Caco-2 (cell line): ENCODE measurements at regions of chr6 and their contacts with region 1.

Region 1: DNA sequence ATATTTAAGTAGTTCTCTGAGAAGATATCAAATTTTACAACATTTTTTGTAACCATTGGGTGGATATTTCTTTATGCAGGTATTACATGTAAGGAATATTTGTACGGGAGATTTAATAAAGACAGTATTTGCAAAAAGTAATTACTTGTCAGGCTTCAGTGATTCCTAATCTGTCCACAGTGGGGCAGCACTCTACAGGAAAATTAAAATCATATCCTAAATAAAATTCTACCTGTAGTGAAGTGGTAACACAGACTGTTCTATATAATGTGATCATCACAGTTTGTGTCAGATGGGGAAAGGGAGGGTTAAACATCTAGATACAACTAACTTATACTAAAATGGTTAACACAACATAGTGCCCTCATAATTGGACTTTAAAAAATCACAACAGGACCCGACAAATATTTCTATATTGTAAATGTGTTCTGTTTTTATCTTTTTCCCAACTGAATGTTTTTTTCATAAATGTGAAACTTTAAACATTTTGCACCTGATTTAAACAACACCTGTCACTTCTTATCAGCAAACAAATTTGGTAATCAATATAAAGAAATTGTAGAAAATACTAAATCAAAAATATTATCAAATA is 145.6 kb upstream of the MANEA start:
- DNase-seq: peak in 1 of 2 experiments; percentile 55
- H3K4me3 ChIP-seq: no peak overlapping the region
- H3K4me3 Mint-ChIP-seq: no peak overlapping the region
- H3K27ac Mint-ChIP-seq: no peak overlapping the region
- H3K4me1 ChIP-seq: no peaks in the 10 kb centered on the region
- H3K4me1 Mint-ChIP-seq: no peaks in the 10 kb centered on the region
- H3K27me3 ChIP-seq: no peaks in the 10 kb centered on the region
- H3K27me3 Mint-ChIP-seq: no peaks in the 10 kb centered on the region
- CTCF ChIP-seq: peak; percentile 57 to 71

Region 2: DNA sequence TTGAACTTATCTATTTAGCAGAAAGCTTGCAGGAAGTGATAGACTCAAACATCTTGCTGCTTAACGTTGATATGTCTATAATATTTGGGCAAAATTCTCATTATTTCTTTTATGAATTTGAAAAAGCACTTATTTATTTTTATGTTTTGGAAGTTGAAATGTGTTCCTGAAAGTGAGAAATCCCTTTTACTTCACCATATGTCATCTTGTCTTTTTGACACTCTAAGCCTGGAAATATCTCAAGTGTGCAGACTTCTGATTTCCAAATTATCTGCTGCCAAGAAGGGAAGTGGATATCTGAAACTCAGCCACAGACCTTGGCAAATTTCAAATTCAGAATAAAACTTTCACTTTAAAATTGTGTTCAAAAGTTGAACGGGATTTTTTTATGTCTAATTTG is 223.1 kb before region 1 on chr6:
- CTCF ChIA-PET with region 1: no interaction called
- POLR2A ChIA-PET with region 1: no interaction called
- intact Hi-C with region 1: no loop called
- DNase-seq: no peak
- H3K4me3 ChIP-seq: no peak overlapping the region
- H3K4me3 Mint-ChIP-seq: no peak overlapping the region
- H3K27ac Mint-ChIP-seq: no peak overlapping the region
- H3K4me1 ChIP-seq: no peaks in the 10 kb centered on the region
- H3K4me1 Mint-ChIP-seq: no peaks in the 10 kb centered on the region
- H3K27me3 ChIP-seq: no peaks in the 10 kb centered on the region
- H3K27me3 Mint-ChIP-seq: no peaks in the 10 kb centered on the region
- CTCF ChIP-seq: no peak

Region 3: DNA sequence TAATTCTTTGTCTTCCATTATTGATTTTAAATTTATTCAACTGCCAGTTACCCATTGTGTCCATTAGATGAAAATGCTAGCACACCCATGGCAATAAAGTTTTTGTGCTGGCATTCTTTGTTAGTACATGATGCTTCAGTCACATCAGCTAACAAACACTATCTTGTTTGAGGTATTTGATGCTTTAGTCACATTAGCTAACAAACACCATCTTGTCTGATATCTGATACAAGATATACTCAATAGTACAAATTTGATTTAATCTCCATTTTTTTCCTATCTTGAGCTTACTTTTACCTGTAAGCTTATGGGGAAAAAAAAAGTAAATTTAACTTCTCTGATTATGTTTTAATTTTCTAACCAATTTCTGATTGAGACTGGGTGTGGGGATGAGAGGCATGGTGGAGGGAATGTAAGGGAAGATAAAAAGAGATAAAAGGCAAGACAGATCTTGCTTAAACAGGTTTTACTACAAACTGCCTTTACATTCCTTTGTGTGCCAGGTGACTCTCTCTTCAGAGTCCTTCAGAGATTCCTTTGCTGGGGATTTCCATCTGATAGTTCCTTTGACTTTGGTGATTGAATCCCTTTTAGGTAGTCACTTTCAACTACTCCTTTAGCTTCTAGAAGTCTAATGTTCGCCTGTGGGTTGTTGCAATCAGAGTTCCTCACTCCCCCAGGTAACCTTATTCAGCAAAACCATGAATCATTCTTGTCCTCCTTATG is 137.9 kb before region 1 on chr6:
- CTCF ChIA-PET with region 1: no interaction called
- POLR2A ChIA-PET with region 1: no interaction called
- intact Hi-C with region 1: no loop called
- DNase-seq: peak; percentile 39 to 53
- H3K4me3 ChIP-seq: no peak overlapping the region
- H3K4me3 Mint-ChIP-seq: peak overlapping the region; percentile 49
- H3K27ac Mint-ChIP-seq: peak overlapping the region; percentile 92
- H3K4me1 ChIP-seq: peaks cover 24% of the 10 kb centered on the region
- H3K4me1 Mint-ChIP-seq: peaks cover 15% of the 10 kb centered on the region
- H3K27me3 ChIP-seq: no peaks in the 10 kb centered on the region
- H3K27me3 Mint-ChIP-seq: no peaks in the 10 kb centered on the region
- CTCF ChIP-seq: no peak

Region 4: GRCh38 chr6:95364016-95364604 is 67.6 kb before region 1 on chr6:
- CTCF ChIA-PET with region 1: no interaction called
- POLR2A ChIA-PET with region 1: no interaction called
- intact Hi-C with region 1: loop called (anchors 1 kb)
- DNase-seq: no peak
- H3K4me3 ChIP-seq: no peak overlapping the region
- H3K4me3 Mint-ChIP-seq: no peak overlapping the region
- H3K27ac Mint-ChIP-seq: no peak overlapping the region
- H3K4me1 ChIP-seq: peaks cover 9% of the 10 kb centered on the region
- H3K4me1 Mint-ChIP-seq: peaks cover 12% of the 10 kb centered on the region
- H3K27me3 ChIP-seq: no peaks in the 10 kb centered on the region
- H3K27me3 Mint-ChIP-seq: no peaks in the 10 kb centered on the region
- CTCF ChIP-seq: peak; percentile 26 to 38

Region 5: GRCh38 chr6:95685822-95686221 is 254.1 kb after region 1 on chr6:
- CTCF ChIA-PET with region 1: no interaction called
- POLR2A ChIA-PET with region 1: no interaction called
- intact Hi-C with region 1: loop called (anchors 1 kb)
- DNase-seq: no peak
- H3K4me3 ChIP-seq: no peak overlapping the region
- H3K4me3 Mint-ChIP-seq: no peak overlapping the region
- H3K27ac Mint-ChIP-seq: no peak overlapping the region
- H3K4me1 ChIP-seq: no peaks in the 10 kb centered on the region; the same call in 1 of the 2 replicates
- H3K4me1 Mint-ChIP-seq: peaks cover 39% of the 10 kb centered on the region
- H3K27me3 ChIP-seq: no peaks in the 10 kb centered on the region
- H3K27me3 Mint-ChIP-seq: no peaks in the 10 kb centered on the region
- CTCF ChIP-seq: no peak

Region 6: GRCh38 chr6:95923518-95923917 is 491.8 kb after region 1 on chr6:
- CTCF ChIA-PET with region 1: no interaction called
- POLR2A ChIA-PET with region 1: no interaction called
- intact Hi-C with region 1: loop called (anchors 1 kb)
- DNase-seq: peak in 1 of 2 experiments; percentile 32
- H3K4me3 ChIP-seq: no peak overlapping the region
- H3K4me3 Mint-ChIP-seq: no peak overlapping the region
- H3K27ac Mint-ChIP-seq: no peak overlapping the region
- H3K4me1 ChIP-seq: no peaks in the 10 kb centered on the region
- H3K4me1 Mint-ChIP-seq: no peaks in the 10 kb centered on the region
- H3K27me3 ChIP-seq: no peaks in the 10 kb centered on the region
- H3K27me3 Mint-ChIP-seq: peaks cover 2% of the 10 kb centered on the region
- CTCF ChIP-seq: peak; percentile 46 to 55

Region 7: DNA sequence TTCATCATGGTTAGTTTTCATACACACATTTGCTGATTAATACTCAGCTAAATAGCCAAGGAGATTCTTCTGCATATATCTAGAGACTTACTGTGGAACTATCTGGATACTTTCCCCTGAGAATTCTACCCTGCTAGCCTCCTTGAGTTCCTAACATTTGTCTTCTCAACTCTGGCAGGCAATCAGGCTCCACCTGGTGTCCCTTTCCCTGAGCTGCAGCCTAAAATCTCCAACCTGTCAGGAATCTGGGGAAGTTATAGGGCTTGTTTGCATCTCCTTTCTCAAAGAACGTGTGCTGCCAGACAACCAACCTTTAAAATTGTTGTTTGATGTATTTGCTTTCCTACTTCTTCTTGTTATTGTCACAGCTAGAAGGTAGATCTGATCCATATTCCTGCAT is 657.4 kb after region 1 on chr6:
- CTCF ChIA-PET with region 1: no interaction called
- POLR2A ChIA-PET with region 1: no interaction called
- intact Hi-C with region 1: loop called (anchors 1 kb)
- DNase-seq: peak; percentile 41 to 50
- H3K4me3 ChIP-seq: no peak overlapping the region
- H3K4me3 Mint-ChIP-seq: no peak overlapping the region
- H3K27ac Mint-ChIP-seq: no peak overlapping the region
- H3K4me1 ChIP-seq: no peaks in the 10 kb centered on the region
- H3K4me1 Mint-ChIP-seq: no peaks in the 10 kb centered on the region
- H3K27me3 ChIP-seq: no peaks in the 10 kb centered on the region
- H3K27me3 Mint-ChIP-seq: no peaks in the 10 kb centered on the region
- CTCF ChIP-seq: peak; percentile 58 to 76